ENCODE measurements at regions of chr5 and their contacts with region 1.

Region 1: DNA sequence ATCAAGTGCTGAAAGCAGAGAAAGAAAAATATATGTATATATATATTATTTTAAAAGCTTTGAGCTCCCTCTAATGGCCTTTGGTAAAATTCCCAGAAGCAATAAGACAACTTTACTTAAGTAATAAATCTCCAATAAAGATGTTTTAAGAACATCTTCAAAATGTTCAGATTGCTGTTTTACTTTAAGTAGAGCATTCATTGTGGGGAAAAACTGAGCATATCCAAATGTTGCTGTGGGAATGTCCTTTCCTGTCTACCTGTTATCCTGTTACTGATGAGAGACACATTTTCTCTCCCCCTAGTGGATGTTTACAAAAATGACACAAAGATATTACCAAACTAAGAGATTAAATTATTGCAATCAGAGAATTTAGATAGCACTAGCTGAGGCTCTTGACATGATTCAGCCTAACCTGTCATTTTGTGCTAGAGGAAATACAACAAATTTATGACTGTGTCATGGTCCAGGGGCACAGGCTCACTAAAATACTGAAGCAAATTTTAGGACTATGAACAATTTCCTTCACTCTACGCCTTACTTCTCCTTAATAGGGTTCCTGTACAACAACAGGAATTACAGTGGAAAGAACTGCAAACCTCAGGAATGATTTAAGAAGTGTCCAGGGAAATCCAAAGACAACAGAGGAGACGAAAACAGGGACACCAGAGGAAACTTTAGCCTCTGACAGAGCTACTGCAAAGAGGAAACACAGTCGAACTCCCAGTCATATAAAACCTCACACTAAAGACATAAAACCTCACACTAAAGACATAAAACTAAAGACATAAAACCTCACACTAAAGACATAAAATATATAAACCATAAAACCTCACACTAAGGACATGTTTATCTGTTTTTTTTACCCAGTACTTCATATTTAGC is 24.3 kb upstream of the PRRC1 start:
- DNase-seq: no peak
- H3K4me3 Mint-ChIP-seq: no peak overlapping the region
- H3K27ac Mint-ChIP-seq: no peak overlapping the region
- H3K4me1 Mint-ChIP-seq: no peaks in the 10 kb centered on the region
- H3K27me3 Mint-ChIP-seq: peaks cover 3% of the 10 kb centered on the region

Region 2: GRCh38 chr5:126544087-126544740 is 948.9 kb before region 1 on chr5:
- CTCF ChIA-PET with region 1: no interaction called
- intact Hi-C with region 1: loop called (anchors 1 kb)
- DNase-seq: peak; percentile 68
- H3K4me3 Mint-ChIP-seq: no peak overlapping the region
- H3K27ac Mint-ChIP-seq: no peak overlapping the region
- H3K4me1 Mint-ChIP-seq: no peaks in the 10 kb centered on the region
- H3K27me3 Mint-ChIP-seq: no peaks in the 10 kb centered on the region

Region 3: GRCh38 chr5:127290019-127290945 is 202.8 kb before region 1 on chr5 and contains the start of gene MEGF10:
- CTCF ChIA-PET with region 1: interaction called, 8 read pairs
- intact Hi-C with region 1: loop called (anchors 1 kb)
- DNase-seq: peak; percentile 42
- H3K4me3 Mint-ChIP-seq: peak within 1 kb of the TSS; percentile 19
- H3K27ac Mint-ChIP-seq: no peak within 1 kb of the TSS
- H3K4me1 Mint-ChIP-seq: peaks cover 13% of the 10 kb centered on the region
- H3K27me3 Mint-ChIP-seq: peaks cover 49% of the 10 kb centered on the region
- total RNA-seq, gene MEGF10: not detected

Region 4: GRCh38 chr5:127313847-127314473 is 179.1 kb before region 1 on chr5:
- CTCF ChIA-PET with region 1: interaction called, 7 read pairs
- intact Hi-C with region 1: loop called (anchors 5 kb)
- DNase-seq: peak; percentile 81
- H3K4me3 Mint-ChIP-seq: no peak overlapping the region
- H3K27ac Mint-ChIP-seq: no peak overlapping the region
- H3K4me1 Mint-ChIP-seq: peaks cover 4% of the 10 kb centered on the region
- H3K27me3 Mint-ChIP-seq: peaks cover under 1% of the 10 kb centered on the region

Region 5: DNA sequence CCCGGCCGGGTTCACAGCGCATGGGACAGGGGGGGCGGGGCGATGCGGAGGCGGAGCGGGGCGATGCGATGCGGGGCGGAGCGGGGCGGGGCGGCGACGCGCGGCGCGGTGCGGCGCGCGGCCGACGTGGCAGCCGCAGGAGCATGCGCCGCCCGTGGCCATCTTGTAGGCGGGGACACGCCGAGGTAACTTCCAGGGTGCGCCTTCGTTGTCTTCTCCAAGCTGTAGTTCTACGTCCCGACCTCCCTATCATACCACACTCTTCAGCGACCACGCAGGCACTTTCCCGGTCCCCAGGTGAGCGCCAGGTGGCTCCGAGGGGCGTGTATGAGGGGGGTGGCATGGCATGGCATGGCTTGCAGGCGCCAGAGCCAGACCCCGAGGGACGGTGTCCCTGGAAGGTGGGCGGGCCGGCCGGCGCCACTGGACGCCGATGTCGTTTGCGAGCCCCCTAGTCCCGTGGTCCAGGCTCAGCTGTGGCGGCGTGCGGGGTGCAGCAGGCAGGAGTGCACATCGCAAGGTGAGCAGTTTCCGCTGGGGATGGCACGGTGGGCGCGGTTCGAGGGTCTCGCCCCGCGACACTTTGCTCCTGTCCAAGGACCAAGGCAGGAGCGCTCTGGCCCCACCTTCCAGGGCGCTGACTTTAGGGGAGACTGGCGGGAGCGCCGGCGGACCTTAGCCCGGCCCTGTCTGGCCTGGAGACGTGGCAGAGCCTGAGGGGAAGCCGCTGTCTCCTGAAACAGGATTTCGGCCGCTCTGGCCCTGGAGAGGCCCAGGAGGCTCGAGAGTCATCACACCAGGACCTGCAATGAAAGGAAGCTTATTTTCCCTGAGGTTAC is 24.6 kb after region 1 on chr5 and contains the start of gene PRRC1:
- CTCF ChIA-PET with region 1: interaction called, 3 read pairs
- intact Hi-C with region 1: loop called (anchors 1 kb)
- DNase-seq: peak; percentile 83
- H3K4me3 Mint-ChIP-seq: peak within 1 kb of the TSS; percentile 81
- H3K27ac Mint-ChIP-seq: peak within 1 kb of the TSS; percentile 63
- H3K4me1 Mint-ChIP-seq: peaks cover 31% of the 10 kb centered on the region
- H3K27me3 Mint-ChIP-seq: no peaks in the 10 kb centered on the region
- total RNA-seq, gene PRRC1: 34.1 to 35.1 TPM